Activated CD8-positive, alpha-beta T cell treated with anti-CD3 and anti-CD28 coated beads for 36 hours (primary cell): ENCODE measurements at regions of chr3 and their contacts with region 1.

Region 1: DNA sequence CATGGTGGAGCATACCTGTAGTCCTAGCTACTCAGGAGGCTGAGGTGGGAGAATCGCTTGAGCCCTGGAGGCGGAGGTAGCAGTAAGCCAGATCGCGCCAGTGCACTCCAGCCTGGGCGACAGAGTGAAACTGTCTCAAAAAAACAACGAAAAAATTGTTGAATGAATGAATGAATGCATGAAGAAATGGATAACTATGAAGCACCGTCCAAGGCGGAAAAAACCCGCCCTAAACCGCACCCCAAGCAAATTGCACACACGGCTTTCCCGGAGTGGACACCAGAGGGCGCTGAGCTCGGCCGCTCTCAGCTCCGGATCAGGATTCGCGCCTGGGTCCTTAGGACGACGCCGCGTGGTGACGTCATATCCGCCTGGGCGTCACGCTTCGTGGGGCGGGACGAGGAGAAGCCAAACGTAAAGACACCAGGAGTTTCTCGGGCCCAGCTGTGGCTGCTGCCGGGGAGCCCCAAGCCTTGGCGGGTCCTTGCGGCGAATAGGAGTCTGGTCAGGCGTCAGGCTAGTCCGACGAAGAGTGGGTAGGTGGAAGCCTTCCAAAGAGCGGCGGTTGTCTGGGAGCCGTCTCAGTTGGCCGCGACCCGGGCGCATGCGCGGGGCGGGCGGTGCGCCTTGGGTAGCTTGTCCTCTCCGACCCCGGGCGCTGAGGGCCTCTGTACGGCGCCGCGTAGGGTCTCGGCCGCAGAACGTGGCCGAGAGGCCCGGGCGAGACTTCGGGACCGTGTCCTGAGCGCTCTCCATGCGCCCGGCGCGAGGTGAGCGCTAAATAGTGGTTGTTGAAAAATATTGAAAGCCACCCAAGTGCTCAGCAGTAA is at the starts of genes HTD2 and RPP14:
- DNase-seq: peak; percentile 99
- ATAC-seq: peak; percentile 91
- H3K4me3 Mint-ChIP-seq: peak within 1 kb of the TSS; percentile 97
- H3K27ac Mint-ChIP-seq: peak within 1 kb of the TSS; percentile 100
- H3K4me1 Mint-ChIP-seq: peaks cover 23% of the 10 kb centered on the region
- H3K27me3 Mint-ChIP-seq: peaks cover 5% of the 10 kb centered on the region
- CTCF ChIP-seq: peak; percentile 81
- total RNA-seq, gene HTD2: 8.4 to 9.6 TPM
- total RNA-seq, gene RPP14: 16.1 to 18.0 TPM

Region 2: DNA sequence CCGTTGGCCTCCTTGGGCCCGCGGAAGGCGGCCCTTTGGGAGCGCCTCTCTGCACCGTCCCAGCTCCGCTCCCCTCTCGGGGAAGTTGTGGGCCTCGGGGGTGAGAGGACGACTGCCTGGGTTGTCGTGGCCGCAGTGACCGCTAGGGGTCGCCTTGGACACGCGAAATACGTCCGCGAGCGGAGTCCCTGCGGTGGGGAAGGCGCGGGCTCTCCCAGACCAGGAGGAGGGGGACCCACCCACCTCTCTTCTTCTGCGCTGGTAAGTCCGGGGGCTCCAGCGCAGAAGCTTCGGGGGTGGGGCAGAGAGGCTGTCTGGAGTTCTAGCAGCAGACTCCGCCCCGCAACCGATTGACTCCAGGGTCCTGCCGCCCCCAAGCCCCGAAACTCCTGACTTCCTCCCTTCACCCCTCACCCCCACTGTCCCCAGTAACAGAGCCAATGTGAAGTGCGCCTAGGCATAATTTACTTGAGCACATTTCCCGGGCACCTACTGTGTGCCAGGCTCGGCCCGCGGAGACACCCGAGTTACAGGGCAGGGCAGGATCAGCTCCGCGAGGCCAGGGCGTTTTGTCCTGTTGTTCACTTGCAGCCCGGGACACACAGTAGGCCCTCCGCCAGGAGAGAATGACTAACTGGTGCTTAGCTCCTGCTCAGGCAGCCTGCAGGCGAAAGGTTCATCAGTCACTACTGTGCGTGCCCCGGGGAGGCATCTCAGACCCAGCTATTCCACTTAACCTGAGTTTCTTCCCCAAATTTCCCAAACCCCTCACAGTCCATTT is 128.2 kb before region 1 on chr3:
- CTCF ChIA-PET with region 1: interaction called, 22 read pairs
- POLR2A ChIA-PET with region 1: no interaction called
- intact Hi-C with region 1: no loop called
- DNase-seq: peak; percentile 91
- ATAC-seq: peak; percentile 89
- H3K4me3 Mint-ChIP-seq: peak overlapping the region; percentile 48
- H3K27ac Mint-ChIP-seq: no peak overlapping the region
- H3K4me1 Mint-ChIP-seq: peaks cover 18% of the 10 kb centered on the region
- H3K27me3 Mint-ChIP-seq: peaks cover 8% of the 10 kb centered on the region
- CTCF ChIP-seq: peak; percentile 98

Region 3: GRCh38 chr3:58217209-58217811 is 88.8 kb before region 1 on chr3:
- CTCF ChIA-PET with region 1: interaction called, 17 read pairs
- POLR2A ChIA-PET with region 1: no interaction called
- intact Hi-C with region 1: no loop called
- DNase-seq: peak; percentile 74
- ATAC-seq: peak; percentile 38
- H3K4me3 Mint-ChIP-seq: no peak overlapping the region
- H3K27ac Mint-ChIP-seq: no peak overlapping the region
- H3K4me1 Mint-ChIP-seq: peaks cover 38% of the 10 kb centered on the region
- H3K27me3 Mint-ChIP-seq: peaks cover 2% of the 10 kb centered on the region
- CTCF ChIP-seq: peak; percentile 87

Region 4: GRCh38 chr3:58324391-58325390 is 18.6 kb after region 1 on chr3:
- CTCF ChIA-PET with region 1: interaction called, 87 read pairs
- POLR2A ChIA-PET with region 1: interaction called, 8 read pairs
- intact Hi-C with region 1: no loop called
- DNase-seq: peak; percentile 37
- ATAC-seq: peak; percentile 63
- H3K4me3 Mint-ChIP-seq: peak overlapping the region; percentile 2
- H3K27ac Mint-ChIP-seq: peak overlapping the region; percentile 87
- H3K4me1 Mint-ChIP-seq: peaks cover 40% of the 10 kb centered on the region
- H3K27me3 Mint-ChIP-seq: no peaks in the 10 kb centered on the region
- CTCF ChIP-seq: no peak

Region 5: GRCh38 chr3:58414538-58415197 is 108.6 kb after region 1 on chr3:
- CTCF ChIA-PET with region 1: interaction called, 27 read pairs
- POLR2A ChIA-PET with region 1: no interaction called
- intact Hi-C with region 1: loop called (anchors 5 kb)
- DNase-seq: peak; percentile 67
- ATAC-seq: peak; percentile 89
- H3K4me3 Mint-ChIP-seq: no peak overlapping the region
- H3K27ac Mint-ChIP-seq: no peak overlapping the region
- H3K4me1 Mint-ChIP-seq: no peaks in the 10 kb centered on the region
- H3K27me3 Mint-ChIP-seq: no peaks in the 10 kb centered on the region
- CTCF ChIP-seq: peak; percentile 62

Region 6: DNA sequence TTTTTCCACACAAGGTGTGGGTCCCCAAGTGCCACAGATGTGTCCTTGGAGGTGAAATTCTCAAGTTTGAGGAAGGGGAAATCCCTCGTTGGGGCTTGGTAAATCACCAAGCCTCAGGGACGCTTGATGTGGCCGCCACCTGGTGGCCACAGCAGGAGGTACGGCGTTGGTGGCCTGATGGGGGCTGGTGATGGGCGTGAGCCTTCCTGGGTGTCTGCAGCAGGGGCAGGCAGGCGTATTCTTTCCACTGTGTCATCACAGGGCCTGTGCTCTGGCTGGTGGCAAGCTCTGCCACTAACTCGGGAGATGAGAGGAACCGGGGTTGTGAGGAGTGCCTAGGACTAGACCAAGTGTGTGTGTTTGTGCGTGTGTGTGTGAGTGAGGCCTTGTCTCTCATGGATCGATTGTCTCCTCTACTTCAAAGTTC is 226.7 kb after region 1 on chr3:
- CTCF ChIA-PET with region 1: interaction called, 19 read pairs
- POLR2A ChIA-PET with region 1: no interaction called
- intact Hi-C with region 1: loop called (anchors 5 kb)
- DNase-seq: peak; percentile 90
- ATAC-seq: peak; percentile 98
- H3K4me3 Mint-ChIP-seq: no peak overlapping the region
- H3K27ac Mint-ChIP-seq: peak overlapping the region; percentile 28
- H3K4me1 Mint-ChIP-seq: peaks cover 12% of the 10 kb centered on the region
- H3K27me3 Mint-ChIP-seq: no peaks in the 10 kb centered on the region
- CTCF ChIP-seq: peak; percentile 82